ENCODE measurements at regions of chr14 and their contacts with region 1.

Region 1: DNA sequence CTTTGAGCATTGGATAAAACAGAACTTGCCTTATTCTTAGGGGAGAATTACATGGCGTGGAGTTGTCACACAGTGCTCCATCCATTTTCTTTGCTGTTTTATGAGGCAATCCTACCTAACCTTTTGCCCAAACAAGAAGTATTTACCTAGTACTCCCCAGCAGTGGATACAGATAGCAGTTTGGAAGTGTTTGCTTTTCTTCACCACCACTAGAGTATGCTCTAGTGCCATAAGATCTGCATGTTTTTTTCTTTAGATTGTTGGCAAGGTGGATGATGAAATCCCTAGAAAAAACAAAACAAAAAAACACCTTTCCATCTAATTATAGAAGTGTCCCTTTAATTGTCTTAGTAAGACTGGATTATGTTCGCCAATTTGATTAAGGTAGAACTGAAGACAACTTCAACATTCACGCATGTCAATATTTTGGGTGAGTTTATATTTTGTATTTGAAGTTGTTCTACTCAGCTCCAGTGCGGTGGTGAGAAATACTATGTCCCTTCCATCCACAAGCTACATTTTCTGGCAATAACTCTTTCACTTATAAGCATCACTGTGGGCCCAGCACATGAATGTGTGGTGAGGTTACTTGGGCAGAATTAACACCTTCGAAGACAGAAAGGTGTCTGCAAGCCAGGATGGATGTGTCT is 23.6 kb upstream of the TMEM260 start:
- DNase-seq: peak; percentile 7 to 41 (median 24)
- ATAC-seq: peak; percentile 91
- H3K4me3 ChIP-seq: no peak overlapping the region
- H3K27ac ChIP-seq: no peak overlapping the region
- H3K4me1 ChIP-seq: no peaks in the 10 kb centered on the region; a peak in 2 of 5 replicates
- H3K27me3 ChIP-seq: peaks cover 3 to 12% of the 10 kb centered on the region in 2 experiments; a peak in 3 of 5 replicates
- CTCF ChIP-seq: peak; percentile 35 to 79 (median 64); a peak in 5 of 6 replicates
- EP300 ChIP-seq: peak; percentile 68
- POLR2A ChIP-seq: no peak
- RAD21 ChIP-seq: peak; percentile 77 to 86

Region 2: GRCh38 chr14:56603648-56604047 is 47.6 kb after region 1 on chr14:
- CTCF ChIA-PET with region 1: no interaction called
- POLR2A ChIA-PET with region 1: no interaction called
- in situ Hi-C with region 1: no loop called
- intact Hi-C with region 1: no loop called
- DNase-seq: peak in 2 of 4 experiments; percentile 12 to 27
- ATAC-seq: peak; percentile 51; the same call in 1 of the 3 replicates
- H3K4me3 ChIP-seq: no peak overlapping the region
- H3K27ac ChIP-seq: no peak overlapping the region
- H3K4me1 ChIP-seq: no peaks in the 10 kb centered on the region; a peak in 1 of 5 replicates
- H3K27me3 ChIP-seq: no peaks in the 10 kb centered on the region
- CTCF ChIP-seq: no peak
- EP300 ChIP-seq: no peak
- POLR2A ChIP-seq: no peak
- RAD21 ChIP-seq: no peak

Region 3: DNA sequence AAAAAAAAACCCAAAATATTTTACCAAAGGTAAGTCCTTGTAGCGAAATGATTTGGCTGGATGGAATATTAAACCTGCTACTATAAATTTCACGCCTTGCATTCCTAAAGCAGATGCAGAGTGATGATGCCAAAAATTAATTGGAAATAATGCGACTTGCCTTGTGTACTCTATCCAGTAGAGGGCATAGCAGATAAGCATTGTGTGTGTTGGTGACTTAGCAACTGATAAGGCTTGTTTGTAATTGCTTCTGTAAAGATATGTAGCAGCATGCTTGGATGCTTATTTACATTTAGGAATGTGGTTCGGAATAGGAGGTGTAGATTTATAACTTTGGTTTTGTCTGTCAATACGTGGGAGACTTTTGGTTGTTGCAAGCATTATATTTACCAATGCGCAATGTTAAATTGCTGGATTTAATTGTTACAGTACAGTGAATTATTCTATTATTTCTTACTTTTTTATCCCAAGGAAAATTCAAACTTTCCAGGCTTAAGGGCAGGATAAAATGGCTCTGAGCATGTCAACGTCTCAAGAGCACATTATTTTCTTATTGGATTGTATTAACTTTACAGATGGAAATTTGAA is 104.0 kb after region 1 on chr14:
- CTCF ChIA-PET with region 1: no interaction called
- POLR2A ChIA-PET with region 1: no interaction called
- in situ Hi-C with region 1: no loop called
- intact Hi-C with region 1: loop called (anchors 5 kb)
- DNase-seq: peak; percentile 32 to 44 (median 36)
- ATAC-seq: peak; percentile 80
- H3K4me3 ChIP-seq: no peak overlapping the region
- H3K27ac ChIP-seq: no peak overlapping the region
- H3K4me1 ChIP-seq: no peaks in the 10 kb centered on the region
- H3K27me3 ChIP-seq: peaks cover 5 to 7% of the 10 kb centered on the region in 2 experiments; a peak in 4 of 5 replicates
- CTCF ChIP-seq: peak; percentile 60 to 74 (median 61)
- EP300 ChIP-seq: no peak
- POLR2A ChIP-seq: no peak
- RAD21 ChIP-seq: peak; percentile 69 to 87

Region 4: DNA sequence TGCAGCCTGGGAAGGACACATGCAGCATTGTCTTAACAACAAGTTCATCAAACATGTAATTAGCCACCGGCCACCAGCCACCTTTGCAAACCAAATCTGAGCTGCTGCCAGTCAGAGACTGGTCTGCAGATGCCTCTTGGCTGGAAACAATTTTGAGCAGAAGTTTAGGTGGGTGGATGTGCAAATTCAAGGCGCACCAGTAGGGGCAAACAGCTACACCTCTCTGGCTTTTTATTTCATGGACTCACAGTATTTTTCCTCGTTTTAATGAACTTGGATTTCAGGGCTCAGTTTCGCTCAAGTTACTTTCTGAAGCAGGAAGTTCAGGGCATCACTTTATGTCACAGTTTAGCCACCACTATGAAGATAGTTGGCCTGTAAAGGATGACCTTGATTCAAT is 159.9 kb after region 1 on chr14:
- CTCF ChIA-PET with region 1: no interaction called
- POLR2A ChIA-PET with region 1: no interaction called
- in situ Hi-C with region 1: no loop called
- intact Hi-C with region 1: no loop called
- DNase-seq: no peak
- ATAC-seq: no peak
- H3K4me3 ChIP-seq: no peak overlapping the region
- H3K27ac ChIP-seq: no peak overlapping the region
- H3K4me1 ChIP-seq: no peaks in the 10 kb centered on the region
- H3K27me3 ChIP-seq: no peaks in the 10 kb centered on the region; a peak in 1 of 5 replicates
- CTCF ChIP-seq: no peak
- EP300 ChIP-seq: no peak
- POLR2A ChIP-seq: no peak
- RAD21 ChIP-seq: no peak

Region 5: GRCh38 chr14:56874375-56874774 is 318.3 kb after region 1 on chr14:
- CTCF ChIA-PET with region 1: no interaction called
- POLR2A ChIA-PET with region 1: no interaction called
- in situ Hi-C with region 1: no loop called
- intact Hi-C with region 1: loop called (anchors 1 kb)
- DNase-seq: peak in 3 of 4 experiments; percentile 5 to 36 (median 22)
- ATAC-seq: peak; percentile 85
- H3K4me3 ChIP-seq: no peak overlapping the region
- H3K27ac ChIP-seq: no peak overlapping the region
- H3K4me1 ChIP-seq: no peaks in the 10 kb centered on the region
- H3K27me3 ChIP-seq: peaks cover 0 to 5% of the 10 kb centered on the region in 2 experiments; a peak in 1 of 5 replicates
- CTCF ChIP-seq: peak; percentile 33 to 50 (median 48); a peak in 5 of 6 replicates
- EP300 ChIP-seq: no peak
- POLR2A ChIP-seq: no peak
- RAD21 ChIP-seq: peak in 1 of 2 experiments; percentile 56; a peak in 2 of 4 replicates

Region 6: GRCh38 chr14:57182760-57183503 is 626.9 kb after region 1 on chr14:
- CTCF ChIA-PET with region 1: no interaction called
- POLR2A ChIA-PET with region 1: no interaction called
- in situ Hi-C with region 1: loop called (anchors 10 kb)
- intact Hi-C with region 1: loop called (anchors 2 kb)
- DNase-seq: peak in 3 of 4 experiments; percentile 4 to 28 (median 9)
- ATAC-seq: peak; percentile 76
- H3K4me3 ChIP-seq: no peak overlapping the region
- H3K27ac ChIP-seq: no peak overlapping the region
- H3K4me1 ChIP-seq: no peaks in the 10 kb centered on the region
- H3K27me3 ChIP-seq: peaks cover 0 to 9% of the 10 kb centered on the region in 2 experiments; a peak in 3 of 5 replicates
- CTCF ChIP-seq: peak; percentile 46 to 59 (median 57); a peak in 5 of 6 replicates
- EP300 ChIP-seq: no peak
- POLR2A ChIP-seq: no peak
- RAD21 ChIP-seq: peak; percentile 64 to 69

Region 7: GRCh38 chr14:57317316-57317715 is 761.3 kb after region 1 on chr14:
- CTCF ChIA-PET with region 1: no interaction called
- POLR2A ChIA-PET with region 1: no interaction called
- in situ Hi-C with region 1: loop called (anchors 10 kb)
- intact Hi-C with region 1: loop called (anchors 5 kb)
- DNase-seq: peak; percentile 54 to 80 (median 55)
- ATAC-seq: peak; percentile 78
- H3K4me3 ChIP-seq: no peak overlapping the region
- H3K27ac ChIP-seq: no peak overlapping the region
- H3K4me1 ChIP-seq: no peaks in the 10 kb centered on the region
- H3K27me3 ChIP-seq: no peaks in the 10 kb centered on the region; a peak in 1 of 5 replicates
- CTCF ChIP-seq: peak; percentile 67 to 79 (median 69)
- EP300 ChIP-seq: no peak
- POLR2A ChIP-seq: no peak
- RAD21 ChIP-seq: peak; percentile 60 to 77